ENCODE measurements at regions of chr5 and their contacts with region 1.

Region 1: GRCh38 chr5:10432059-10433008 is 9.3 kb upstream of the ROPN1L start:
- DNase-seq: no peak
- ATAC-seq: peak; percentile 72 to 86 (median 84)
- H3K4me3 ChIP-seq: no peak overlapping the region
- H3K27ac ChIP-seq: peak overlapping the region; percentile 46
- H3K4me1 ChIP-seq: peaks cover 8% of the 10 kb centered on the region
- H3K27me3 ChIP-seq: no peaks in the 10 kb centered on the region
- CTCF ChIP-seq: no peak

Region 2: DNA sequence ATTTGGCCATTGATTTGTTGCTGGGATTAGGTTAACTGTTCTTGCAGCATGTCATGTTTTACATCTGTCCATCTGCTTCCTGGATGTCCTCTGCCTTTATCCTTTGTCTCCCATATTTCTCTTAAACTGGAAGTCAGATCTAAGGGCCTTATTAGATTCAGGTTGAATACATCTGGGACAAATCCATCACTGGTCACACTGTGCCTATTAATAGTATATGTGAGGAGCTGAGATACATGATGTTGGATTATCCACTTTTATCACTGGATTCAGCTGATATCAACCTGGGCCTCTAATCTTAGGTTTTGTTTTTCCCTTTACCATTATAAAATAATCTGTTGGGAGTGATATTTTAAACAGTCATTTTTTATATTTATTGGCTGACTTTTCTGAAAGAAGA is 32.5 kb before region 1 on chr5:
- intact Hi-C with region 1: loop called (anchors 5 kb)
- DNase-seq: no peak
- ATAC-seq: peak; percentile 61 to 78 (median 74)
- H3K4me3 ChIP-seq: no peak overlapping the region
- H3K27ac ChIP-seq: peak overlapping the region; percentile 73
- H3K4me1 ChIP-seq: peaks cover 26% of the 10 kb centered on the region
- H3K27me3 ChIP-seq: no peaks in the 10 kb centered on the region
- CTCF ChIP-seq: no peak

Region 3: DNA sequence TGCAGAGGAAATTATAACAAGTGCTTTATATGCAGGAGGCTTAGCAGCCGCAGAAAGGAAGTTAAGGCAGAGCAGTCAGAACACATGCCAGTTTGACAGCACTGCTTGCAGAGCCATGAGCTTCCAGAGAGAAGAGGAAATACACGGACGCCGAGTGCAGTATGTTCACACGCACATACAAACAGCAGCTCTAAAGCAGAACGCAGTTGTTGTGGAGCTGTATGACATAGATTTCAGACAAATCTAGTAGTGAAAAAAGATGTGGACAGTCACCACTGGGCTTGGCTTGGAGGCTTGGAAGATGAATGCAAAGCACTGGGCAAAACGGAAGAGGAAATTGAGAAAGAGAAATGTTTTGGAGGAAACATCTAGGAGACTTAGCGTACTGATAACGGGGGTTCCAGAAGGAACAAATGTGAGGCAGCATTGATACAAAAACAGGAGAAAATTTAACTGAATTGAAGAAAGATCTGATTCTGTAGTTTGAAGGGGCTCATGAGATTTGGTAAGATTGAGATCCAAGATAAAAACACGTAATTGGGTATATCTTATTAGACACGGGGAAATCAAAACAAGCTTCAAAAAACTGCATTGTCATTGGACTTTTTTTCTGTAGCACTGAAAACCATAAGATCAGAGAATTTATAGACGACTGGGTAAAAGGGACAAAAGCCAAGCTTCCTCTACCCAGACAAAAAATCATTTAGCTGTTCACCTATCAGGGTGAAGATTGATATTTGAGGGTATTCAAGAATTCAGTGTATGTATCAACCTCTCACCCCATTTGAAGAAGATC is 10.2 kb before region 1 on chr5:
- intact Hi-C with region 1: no loop called
- DNase-seq: no peak
- ATAC-seq: no peak
- H3K4me3 ChIP-seq: no peak overlapping the region
- H3K27ac ChIP-seq: no peak overlapping the region
- H3K4me1 ChIP-seq: peaks cover 6% of the 10 kb centered on the region
- H3K27me3 ChIP-seq: no peaks in the 10 kb centered on the region
- CTCF ChIP-seq: no peak

Region 4: GRCh38 chr5:10595678-10596309 is 163.5 kb after region 1 on chr5:
- intact Hi-C with region 1: no loop called
- DNase-seq: no peak
- ATAC-seq: peak; percentile 81 to 89 (median 86)
- H3K4me3 ChIP-seq: peak overlapping the region; percentile 47
- H3K27ac ChIP-seq: peak overlapping the region; percentile 91
- H3K4me1 ChIP-seq: peaks cover 45% of the 10 kb centered on the region
- H3K27me3 ChIP-seq: no peaks in the 10 kb centered on the region
- CTCF ChIP-seq: no peak